Activated CD4-positive, alpha-beta T cell treated with anti-CD3 and anti-CD28 coated beads for 36 hours (primary cell): ENCODE measurements at regions of chrX and their contacts with region 1.

Region 1: DNA sequence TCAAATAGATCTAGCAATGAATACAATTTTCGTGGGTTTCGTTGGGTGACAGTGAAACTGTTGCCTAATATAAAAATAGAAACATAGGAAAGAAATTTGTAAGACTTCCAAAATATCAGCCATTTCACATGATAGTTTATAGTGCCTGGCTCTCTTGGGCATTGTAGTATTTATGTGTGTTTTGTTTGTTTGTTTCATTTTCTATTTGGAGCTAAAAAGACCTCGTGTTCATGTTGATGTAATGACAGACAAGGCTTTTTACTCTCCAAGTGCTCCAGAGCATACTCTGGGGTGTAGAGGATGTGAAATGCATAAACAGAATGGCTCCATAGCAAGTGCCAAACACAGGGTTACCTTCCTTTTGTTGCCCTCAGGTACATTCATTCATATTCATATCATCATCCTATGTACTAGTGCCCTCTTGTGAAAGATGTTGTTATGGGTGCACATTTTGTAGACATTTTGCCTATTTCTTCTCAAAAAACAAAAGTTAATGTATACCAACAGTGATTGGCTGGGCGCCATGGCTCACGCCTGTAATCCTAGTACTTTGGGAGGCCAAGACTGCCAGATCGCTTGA is 100.7 kb upstream of the AMOT start:
- DNase-seq: no peak
- ATAC-seq: no peak
- H3K4me3 Mint-ChIP-seq: no peak overlapping the region
- H3K27ac Mint-ChIP-seq: no peak overlapping the region
- H3K4me1 Mint-ChIP-seq: no peaks in the 10 kb centered on the region
- H3K27me3 Mint-ChIP-seq: no peaks in the 10 kb centered on the region

Region 2: GRCh38 chrX:112760697-112761096 is 180.6 kb before region 1 on chrX:
- CTCF ChIA-PET with region 1: no interaction called
- POLR2A ChIA-PET with region 1: no interaction called
- intact Hi-C with region 1: loop called in 1 of 2 experiments (anchors 10 kb)
- DNase-seq: no peak
- ATAC-seq: no peak
- H3K4me3 Mint-ChIP-seq: no peak overlapping the region
- H3K27ac Mint-ChIP-seq: no peak overlapping the region
- H3K4me1 Mint-ChIP-seq: no peaks in the 10 kb centered on the region
- H3K27me3 Mint-ChIP-seq: peaks cover 4% of the 10 kb centered on the region